Tibial artery (tissue), 4 donors: ENCODE measurements at regions of chr7 and their contacts with region 1.

Region 1: DNA sequence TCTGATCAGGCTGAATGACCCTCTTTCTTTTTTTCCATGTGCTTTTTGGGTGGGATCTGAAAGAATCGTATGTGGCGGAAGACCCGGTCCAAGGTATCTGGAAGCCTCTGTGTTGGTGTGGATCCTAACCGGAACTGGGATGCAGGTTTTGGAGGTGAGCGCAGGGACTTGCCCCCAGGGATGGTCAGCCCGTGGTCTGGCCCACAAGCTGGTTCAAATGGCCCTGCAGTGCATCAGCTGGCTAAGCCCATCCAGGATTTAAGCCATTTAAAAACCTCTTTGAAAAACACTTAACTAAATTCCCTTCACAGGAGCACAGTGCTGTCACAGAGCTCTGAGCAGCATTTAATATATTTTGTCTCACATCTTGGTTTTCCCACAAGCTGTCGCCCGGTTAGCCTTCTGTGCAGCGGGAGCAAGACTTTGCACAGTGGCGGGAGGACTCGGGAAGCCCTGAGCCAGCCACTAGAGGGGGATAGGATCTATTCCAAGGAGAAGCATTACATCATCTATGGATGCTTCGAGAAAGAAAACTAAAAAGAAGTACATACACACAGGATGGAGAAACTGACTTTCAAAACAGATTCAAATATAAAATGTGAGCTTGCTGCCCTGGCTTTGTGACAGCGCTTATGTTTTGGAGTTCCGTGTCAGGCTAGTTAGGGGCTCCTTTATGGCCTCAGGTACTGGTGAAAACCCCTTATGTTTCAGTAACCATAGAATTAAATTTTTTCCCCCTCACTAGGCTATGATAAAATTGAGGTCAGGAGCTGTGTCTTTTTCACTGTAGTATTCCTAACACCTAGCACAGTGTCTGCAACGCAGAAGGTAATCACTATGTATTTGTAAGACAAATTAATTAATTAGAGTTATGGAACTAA is 11.3 kb downstream of the CPA2 start:
- DNase-seq: peak; percentile 59 to 79
- H3K4me3 ChIP-seq: no peak overlapping the region
- H3K27ac ChIP-seq: no peak overlapping the region
- H3K4me1 ChIP-seq: peaks cover 0 to 44% (median 11%) of the 10 kb centered on the region in 4 donors
- H3K27me3 ChIP-seq: no peaks in the 10 kb centered on the region
- CTCF ChIP-seq: peak; percentile 69

Region 2: DNA sequence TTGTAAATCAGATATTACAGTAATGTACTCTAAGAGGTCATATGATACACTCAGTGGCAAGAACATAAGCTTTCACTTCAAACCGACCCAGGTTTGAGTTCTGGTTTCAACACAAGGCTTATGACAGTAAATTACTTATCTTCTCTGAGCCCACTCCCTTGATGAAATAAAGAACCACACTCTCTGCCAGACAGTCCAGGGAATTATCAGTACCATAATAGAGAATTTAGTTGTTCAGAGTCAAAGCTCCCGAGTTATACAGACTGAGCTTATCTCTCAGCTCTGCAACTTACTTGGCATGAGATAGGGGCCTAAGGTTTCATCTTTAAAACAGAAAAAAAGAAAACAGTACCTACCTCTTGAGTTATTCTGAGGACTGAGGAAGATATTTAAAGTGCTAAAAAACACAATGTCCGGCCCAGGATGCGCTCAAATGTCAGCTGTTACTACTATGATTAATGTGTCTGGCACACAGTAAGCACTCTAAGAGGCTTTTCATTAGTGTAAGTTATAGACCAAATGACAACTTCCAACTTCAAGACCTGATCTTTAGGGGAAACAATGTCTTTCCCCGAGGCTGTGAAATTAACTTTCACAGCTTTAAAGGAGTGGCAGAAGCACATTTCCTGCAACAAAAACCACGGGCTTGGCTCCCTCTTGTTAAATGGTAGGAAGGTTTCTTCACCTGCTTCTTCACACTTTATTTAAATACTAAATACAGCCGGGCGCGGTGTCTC is 363.3 kb before region 1 on chr7:
- intact Hi-C with region 1: no loop called
- DNase-seq: no peak
- H3K4me3 ChIP-seq: no peak overlapping the region
- H3K27ac ChIP-seq: no peak overlapping the region
- H3K4me1 ChIP-seq: peaks cover 0 to 80% (median 32%) of the 10 kb centered on the region in 4 donors
- H3K27me3 ChIP-seq: no peaks in the 10 kb centered on the region
- CTCF ChIP-seq: no peak

Region 3: DNA sequence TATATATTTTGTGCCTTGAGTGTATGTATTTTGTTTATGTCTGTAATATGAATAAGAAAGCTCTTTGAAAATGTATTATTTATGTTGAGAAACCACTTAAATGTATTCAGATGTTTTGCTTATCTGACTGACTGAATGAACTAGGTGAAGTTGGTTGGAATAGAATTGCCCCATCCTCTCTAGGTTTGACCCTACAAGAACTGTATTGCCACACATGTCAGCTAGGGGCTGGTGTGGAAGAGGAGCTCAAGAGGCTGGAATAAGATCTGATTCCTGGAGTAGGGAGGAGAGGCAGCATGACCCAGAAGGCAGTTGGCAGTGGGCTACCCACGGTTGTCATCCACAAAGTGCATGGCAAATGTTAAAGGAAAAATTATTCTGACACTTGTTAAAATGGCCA is 61.3 kb before region 1 on chr7:
- intact Hi-C with region 1: no loop called
- DNase-seq: no peak
- H3K4me3 ChIP-seq: no peak overlapping the region
- H3K27ac ChIP-seq: no peak overlapping the region
- H3K4me1 ChIP-seq: no peaks in the 10 kb centered on the region
- H3K27me3 ChIP-seq: no peaks in the 10 kb centered on the region
- CTCF ChIP-seq: no peak

Region 4: GRCh38 chr7:130393101-130393561 is 115.1 kb after region 1 on chr7:
- intact Hi-C with region 1: loop called (anchors 10 kb)
- DNase-seq: no peak
- H3K4me3 ChIP-seq: no peak overlapping the region
- H3K27ac ChIP-seq: peak overlapping the region; percentile 14 to 59
- H3K4me1 ChIP-seq: peaks cover 0 to 54% (median 12%) of the 10 kb centered on the region in 4 donors
- H3K27me3 ChIP-seq: no peaks in the 10 kb centered on the region
- CTCF ChIP-seq: no peak

Region 5: GRCh38 chr7:130440527-130441365 is 162.7 kb after region 1 on chr7 and contains the start of gene CEP41:
- intact Hi-C with region 1: loop called (anchors 1 kb)
- DNase-seq: peak; percentile 95 to 98
- H3K4me3 ChIP-seq: peak within 1 kb of the TSS; percentile 66 to 85
- H3K27ac ChIP-seq: peak within 1 kb of the TSS; percentile 81
- H3K4me1 ChIP-seq: peaks cover 0 to 14% (median 5%) of the 10 kb centered on the region in 4 donors
- H3K27me3 ChIP-seq: no peaks in the 10 kb centered on the region
- CTCF ChIP-seq: no peak

Region 6: GRCh38 chr7:130486114-130486958 is 208.3 kb after region 1 on chr7:
- intact Hi-C with region 1: loop called (anchors 5 kb)
- DNase-seq: no peak
- H3K4me3 ChIP-seq: peak overlapping the region; percentile 44 to 54
- H3K27ac ChIP-seq: no peak overlapping the region
- H3K4me1 ChIP-seq: peaks cover 0 to 38% (median 17%) of the 10 kb centered on the region in 4 donors
- H3K27me3 ChIP-seq: peaks cover 0 to 6% of the 10 kb centered on the region in 2 donors
- CTCF ChIP-seq: peak; percentile 24 to 53

Region 7: GRCh38 chr7:130668257-130669084 is 390.5 kb after region 1 on chr7 and contains the start of gene COPG2:
- intact Hi-C with region 1: loop called (anchors 10 kb)
- DNase-seq: peak; percentile 80 to 91
- H3K4me3 ChIP-seq: peak within 1 kb of the TSS; percentile 63 to 80
- H3K27ac ChIP-seq: peak within 1 kb of the TSS; percentile 78 to 79
- H3K4me1 ChIP-seq: peaks cover 0 to 7% (median 3%) of the 10 kb centered on the region in 4 donors
- H3K27me3 ChIP-seq: no peaks in the 10 kb centered on the region
- CTCF ChIP-seq: no peak